Cardiac septum (tissue), 1 donor: ENCODE measurements at regions of chr3 and their contacts with region 1.

Region 1: DNA sequence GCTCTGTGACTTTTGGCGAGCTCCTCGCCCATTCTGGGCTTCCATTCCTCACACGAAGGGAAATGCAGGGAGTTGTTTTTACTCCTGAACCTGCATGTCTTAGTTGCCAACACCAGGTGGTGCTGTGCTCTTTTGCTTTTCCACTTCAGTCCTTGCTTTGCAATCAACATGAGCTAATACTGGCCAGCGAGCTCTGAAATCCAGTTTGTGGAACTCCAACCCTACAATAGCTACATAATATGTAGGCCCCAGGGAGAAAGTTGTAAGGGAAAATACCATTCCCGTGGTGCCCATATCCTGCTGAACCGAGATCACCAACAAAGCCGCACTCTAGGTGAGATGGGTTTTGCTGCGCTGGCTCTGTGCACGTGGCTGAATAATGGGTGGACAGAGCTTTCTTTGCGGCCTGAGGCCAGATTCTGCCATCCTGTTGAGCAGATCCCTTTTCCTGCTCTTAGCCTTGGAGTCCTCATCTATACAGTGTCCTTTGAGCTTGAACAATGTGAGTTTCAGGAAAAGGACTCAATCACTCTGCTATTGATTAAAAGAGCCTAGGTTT is 25.0 kb downstream of the LSM3 start:
- DNase-seq: no peak

Region 2: GRCh38 chr3:14234251-14235002 is 30.8 kb after region 1 on chr3:
- intact Hi-C with region 1: loop called (anchors 2 kb)
- DNase-seq: peak; percentile 73

Region 3: DNA sequence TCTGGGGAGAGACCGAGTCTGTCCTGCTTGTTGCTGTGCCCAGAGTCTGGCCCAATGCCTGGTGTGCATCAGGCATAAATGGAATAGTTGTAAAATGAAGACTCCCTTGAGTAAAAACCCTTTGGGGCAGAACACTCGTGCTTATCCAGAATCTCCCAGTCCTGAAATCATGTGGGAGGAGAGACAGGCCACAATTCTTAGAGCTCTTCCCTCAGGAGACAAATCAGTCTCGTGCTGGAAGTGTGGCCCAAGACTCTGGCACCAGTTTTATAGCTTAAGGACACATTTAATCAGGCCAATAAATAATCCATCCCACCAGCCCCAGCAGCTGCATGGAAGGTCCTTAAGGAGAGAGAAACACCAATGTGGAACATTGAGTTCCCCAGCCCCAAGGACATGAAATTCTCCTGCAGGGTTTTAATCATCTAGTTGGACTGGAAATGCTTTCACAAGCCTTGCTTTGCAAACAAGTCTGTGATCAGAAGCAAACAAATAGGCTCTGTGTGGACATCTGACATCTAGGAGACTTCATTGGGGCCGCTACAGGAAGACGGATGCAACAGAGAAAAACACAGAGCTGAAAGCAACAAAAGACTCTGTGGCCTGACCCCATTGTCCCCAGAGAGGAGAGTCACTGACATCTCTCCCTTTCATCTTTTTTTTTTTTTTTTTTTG is 45.4 kb after region 1 on chr3:
- intact Hi-C with region 1: no loop called
- DNase-seq: peak; percentile 36

Region 4: DNA sequence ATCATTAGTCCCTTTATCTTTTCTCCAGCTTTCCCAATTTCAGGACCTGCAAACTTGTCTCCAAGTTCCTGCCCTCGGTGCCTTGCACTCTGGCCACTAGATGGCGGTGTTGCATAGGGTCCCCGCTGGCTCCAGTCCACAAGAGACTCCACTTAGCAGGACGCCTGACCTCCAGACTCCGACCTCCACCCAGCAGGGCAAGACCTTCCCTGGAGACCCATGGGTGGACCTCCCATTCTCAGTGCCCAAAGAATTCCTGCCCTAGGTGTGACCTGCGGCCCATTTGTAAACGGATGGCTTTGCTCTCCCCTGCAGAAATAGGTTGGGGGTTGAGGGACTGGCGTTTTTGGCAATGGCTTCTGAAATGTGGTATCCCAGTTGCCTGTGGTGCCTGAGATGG is 57.6 kb after region 1 on chr3:
- intact Hi-C with region 1: loop called (anchors 2 kb)
- DNase-seq: peak; percentile 92

Region 5: GRCh38 chr3:14402304-14402811 is 198.8 kb after region 1 on chr3 and contains the start of gene SLC6A6:
- intact Hi-C with region 1: loop called (anchors 5 kb)
- DNase-seq: peak; percentile 97
- total RNA-seq, gene SLC6A6: 129 TPM

Region 6: DNA sequence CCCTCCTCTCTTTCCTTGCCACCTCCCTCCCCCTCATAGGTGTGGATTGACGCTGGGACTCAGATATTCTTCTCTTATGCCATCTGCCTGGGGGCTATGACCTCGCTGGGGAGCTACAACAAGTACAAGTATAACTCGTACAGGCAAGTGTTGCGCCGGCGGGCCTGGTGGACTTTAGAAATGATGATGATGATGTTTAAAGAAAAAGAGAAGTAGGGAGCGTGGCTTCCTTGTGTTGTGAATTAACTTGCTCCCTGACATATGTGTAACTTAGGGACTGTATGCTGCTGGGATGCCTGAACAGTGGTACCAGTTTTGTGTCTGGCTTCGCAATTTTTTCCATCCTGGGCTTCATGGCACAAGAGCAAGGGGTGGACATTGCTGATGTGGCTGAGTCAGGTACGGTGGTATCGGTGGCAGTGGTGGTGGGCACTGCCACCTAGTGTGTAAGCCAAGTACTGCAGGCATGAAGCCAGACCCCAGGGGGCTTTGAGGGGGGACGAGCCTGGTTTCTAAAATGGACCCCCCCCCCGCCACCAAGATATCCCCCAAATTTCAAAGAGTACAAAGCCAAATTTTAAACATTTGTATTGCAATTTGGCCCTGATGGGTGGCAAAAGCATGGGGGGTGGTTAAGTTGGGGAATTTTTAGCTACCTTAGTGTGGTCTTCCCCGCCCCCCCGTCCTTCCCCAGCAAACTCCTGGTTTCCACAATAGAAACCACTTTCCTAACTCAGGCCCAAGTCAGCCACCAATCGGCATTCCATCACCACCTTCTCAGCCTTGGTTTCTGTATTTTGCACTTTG is 264.4 kb after region 1 on chr3:
- intact Hi-C with region 1: loop called (anchors 1 kb)
- DNase-seq: no peak

Region 7: GRCh38 chr3:14548321-14548729 is 344.7 kb after region 1 on chr3:
- intact Hi-C with region 1: loop called (anchors 5 kb)
- DNase-seq: no peak